ENCODE measurements at regions of chr7 and their contacts with region 1.

Region 1: DNA sequence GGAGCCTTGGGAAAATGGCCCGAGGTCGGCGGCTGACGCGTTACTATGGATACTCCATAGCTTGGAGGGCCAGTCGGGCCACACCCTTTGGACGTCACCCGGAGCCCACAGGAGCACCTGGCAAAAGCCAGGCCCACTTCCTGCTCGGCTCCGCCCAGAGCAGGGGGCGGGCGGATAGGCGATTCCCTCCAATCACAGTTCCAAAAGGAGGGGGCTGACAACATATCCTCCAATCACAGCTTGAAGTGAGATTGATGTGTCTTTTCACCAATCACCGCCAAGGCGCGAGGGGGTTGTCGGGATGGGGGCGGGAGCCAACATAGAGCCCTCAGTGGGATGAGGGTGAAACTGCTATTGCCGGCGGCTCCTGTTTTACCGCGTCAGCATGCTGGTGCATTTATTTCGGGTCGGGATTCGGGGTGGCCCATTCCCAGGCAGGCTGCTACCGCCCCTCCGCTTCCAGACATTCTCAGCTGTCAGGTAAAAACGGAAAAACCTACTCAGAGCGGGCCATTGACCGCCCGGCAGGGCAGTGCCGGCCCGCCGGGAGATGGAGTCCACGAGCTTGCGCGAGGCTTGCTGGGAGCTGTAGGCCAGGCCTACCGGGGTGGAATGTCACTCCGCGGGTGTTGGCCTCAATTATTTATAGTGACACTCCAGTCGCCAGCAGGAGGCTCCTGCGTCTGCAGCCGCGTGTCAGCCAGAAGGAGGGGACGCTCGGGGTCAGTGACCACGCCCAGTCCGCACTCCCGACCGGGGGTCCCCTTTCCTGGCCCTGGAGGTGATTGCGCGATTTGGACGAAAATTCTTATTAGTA is at the start of gene ABCB8:
- DNase-seq: peak; percentile 99 to 100
- ATAC-seq: peak; percentile 95 to 96
- H3K4me3 ChIP-seq: peak within 1 kb of the TSS; percentile 49
- H3K27ac ChIP-seq: peak within 1 kb of the TSS; percentile 73 to 90
- H3K4me1 ChIP-seq: peaks cover 21% of the 10 kb centered on the region; the same call in 2 of the 3 replicates
- CTCF ChIP-seq: peak; percentile 53
- EP300 ChIP-seq: no peak
- POLR2A ChIP-seq: peak; percentile 61
- RAD21 ChIP-seq: peak; percentile 56 to 65
- polyA plus RNA-seq, gene ABCB8: 19.6 and 22.7 TPM in 2 replicates

Region 2: GRCh38 chr7:151038951-151039849 is 10.9 kb after region 1 on chr7:
- CTCF ChIA-PET with region 1: interaction called, 16 read pairs
- POLR2A ChIA-PET with region 1: interaction called, 15 read pairs
- DNase-seq: peak; percentile 79 to 93
- ATAC-seq: peak; percentile 81 to 88
- H3K4me3 ChIP-seq: no peak overlapping the region
- H3K27ac ChIP-seq: peak overlapping the region; percentile 79 to 88
- H3K4me1 ChIP-seq: peaks cover 33% of the 10 kb centered on the region
- CTCF ChIP-seq: no peak
- EP300 ChIP-seq: no peak
- POLR2A ChIP-seq: peak; percentile 48
- RAD21 ChIP-seq: peak in 1 of 2 experiments; percentile 5; a peak in 2 of 5 replicates

Measured in A549 (cell line).